ENCODE measurements at regions of chr14 and their contacts with region 1.

Region 1: GRCh38 chr14:24067145-24068082 is 3.9 kb upstream of the CPNE6 start:
- DNase-seq: no peak
- H3K4me3 ChIP-seq: no peak overlapping the region
- CTCF ChIP-seq: no peak

Region 2: GRCh38 chr14:23926543-23926942 is 140.9 kb before region 1 on chr14:
- CTCF ChIA-PET with region 1: no interaction called
- POLR2A ChIA-PET with region 1: no interaction called
- DNase-seq: no peak
- H3K4me3 ChIP-seq: no peak overlapping the region
- CTCF ChIP-seq: no peak

Region 3: GRCh38 chr14:24036169-24036962 is 31.0 kb before region 1 on chr14:
- CTCF ChIA-PET with region 1: no interaction called
- POLR2A ChIA-PET with region 1: no interaction called
- DNase-seq: no peak
- H3K4me3 ChIP-seq: peak overlapping the region; percentile 63
- CTCF ChIP-seq: peak; percentile 75

Region 4: GRCh38 chr14:24080888-24081738 is 13.7 kb after region 1 on chr14:
- CTCF ChIA-PET with region 1: interaction called, 43 read pairs
- POLR2A ChIA-PET with region 1: no interaction called
- DNase-seq: no peak
- H3K4me3 ChIP-seq: peak overlapping the region; percentile 55
- CTCF ChIP-seq: no peak

Measured in AG04449 (cell line).